K562 (cell line): ENCODE measurements at regions of chr10 and their contacts with region 1.

Region 1: GRCh38 chr10:75235375-75236177 is at the start of gene COMTD1:
- DNase-seq: peak; percentile 96 to 98 (median 96)
- ATAC-seq: peak; percentile 69
- H3K4me3 ChIP-seq: peak within 1 kb of the TSS; percentile 57
- H3K27ac ChIP-seq: peak within 1 kb of the TSS; percentile 91
- H3K4me1 ChIP-seq: peaks cover 16 to 42% of the 10 kb centered on the region in 2 experiments
- H3K27me3 ChIP-seq: no peaks in the 10 kb centered on the region
- CTCF ChIP-seq: peak; percentile 100
- EP300 ChIP-seq: peak; percentile 50; the same call in 1 of the 2 replicates
- POLR2A ChIP-seq: peak; percentile 60; the same call in 1 of the 2 replicates
- RAD21 ChIP-seq: peak; percentile 100
- polyA plus RNA-seq, gene COMTD1: 0.41 to 1.4 TPM

Region 2: DNA sequence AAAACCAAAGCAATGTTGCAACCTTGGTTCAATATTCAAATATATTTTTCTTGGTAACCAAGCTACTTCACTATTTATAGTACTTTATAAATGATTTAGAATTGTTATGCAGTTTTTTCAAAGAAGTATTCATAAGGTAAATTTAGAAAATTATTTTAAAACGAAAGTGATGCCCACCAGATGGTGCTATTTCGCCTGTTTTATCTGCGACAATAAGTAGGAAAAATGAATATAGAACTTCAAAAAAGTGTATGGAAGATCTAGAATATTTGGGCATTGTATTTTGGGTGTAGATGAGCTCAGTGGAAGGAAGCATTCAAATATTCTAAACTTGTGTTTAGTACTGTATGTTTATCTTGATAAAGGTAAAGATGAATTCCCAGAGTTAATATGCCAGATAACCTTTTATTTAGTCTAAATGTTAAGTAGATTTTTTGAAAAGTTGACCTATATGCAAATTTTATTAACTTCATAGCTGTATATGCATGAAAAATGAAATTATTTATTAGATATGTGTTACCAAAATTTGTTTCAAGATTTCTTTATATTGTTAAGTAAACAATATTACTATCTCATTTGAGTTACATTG is 991.4 kb before region 1 on chr10:
- CTCF ChIA-PET with region 1: interaction called, 53 read pairs
- POLR2A ChIA-PET with region 1: interaction called, 3 read pairs
- in situ Hi-C with region 1: loop called (anchors 10 kb)
- intact Hi-C with region 1: loop called (anchors 5 kb)
- DNase-seq: peak in 1 of 4 experiments; percentile 69
- ATAC-seq: no peak
- H3K4me3 ChIP-seq: no peak overlapping the region
- H3K27ac ChIP-seq: no peak overlapping the region
- H3K4me1 ChIP-seq: peaks cover 9 to 14% of the 10 kb centered on the region in 2 experiments; a peak in 4 of 5 replicates
- H3K27me3 ChIP-seq: no peaks in the 10 kb centered on the region
- CTCF ChIP-seq: peak in 2 of 3 experiments; percentile 43 to 73; a peak in 4 of 6 replicates
- EP300 ChIP-seq: no peak
- POLR2A ChIP-seq: no peak
- RAD21 ChIP-seq: peak; percentile 72 to 75

Region 3: DNA sequence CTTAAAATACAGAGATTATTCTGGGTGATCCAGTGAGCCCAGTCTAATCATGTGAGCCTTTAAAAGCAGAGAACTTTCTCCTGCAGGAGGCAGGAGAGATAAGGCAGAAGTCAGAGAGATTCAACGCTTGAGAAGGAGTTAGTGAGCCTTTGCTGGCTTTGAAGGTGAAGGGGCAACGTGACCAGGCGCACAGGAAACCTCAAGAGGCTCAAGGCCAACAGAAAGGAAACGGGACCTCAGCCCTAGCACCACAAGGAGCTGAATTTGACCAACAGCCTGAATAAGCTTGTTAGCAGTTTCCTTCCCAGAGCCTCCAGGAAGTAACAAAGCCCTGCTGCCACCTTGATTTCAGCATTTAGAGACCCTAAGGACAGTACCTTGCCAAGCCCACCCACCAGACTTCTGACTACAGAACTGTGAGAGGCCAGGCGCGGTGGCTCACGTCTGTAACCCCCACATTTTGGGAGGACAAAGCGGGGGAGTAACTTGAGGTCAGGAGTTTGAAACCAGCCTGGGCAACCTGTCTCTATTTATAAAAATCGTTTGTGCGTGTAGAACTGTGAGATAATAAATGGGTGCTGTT is 496.5 kb before region 1 on chr10:
- CTCF ChIA-PET with region 1: interaction called, 3 read pairs
- POLR2A ChIA-PET with region 1: no interaction called
- in situ Hi-C with region 1: no loop called
- intact Hi-C with region 1: loop called (anchors 10 kb)
- DNase-seq: peak in 2 of 4 experiments; percentile 55 to 74
- ATAC-seq: peak; percentile 91
- H3K4me3 ChIP-seq: no peak overlapping the region
- H3K27ac ChIP-seq: no peak overlapping the region
- H3K4me1 ChIP-seq: peaks cover 3 to 7% of the 10 kb centered on the region in 2 experiments; a peak in 3 of 5 replicates
- H3K27me3 ChIP-seq: no peaks in the 10 kb centered on the region
- CTCF ChIP-seq: peak; percentile 56 to 79 (median 63)
- EP300 ChIP-seq: no peak
- POLR2A ChIP-seq: no peak
- RAD21 ChIP-seq: peak; percentile 81 to 88

Region 4: DNA sequence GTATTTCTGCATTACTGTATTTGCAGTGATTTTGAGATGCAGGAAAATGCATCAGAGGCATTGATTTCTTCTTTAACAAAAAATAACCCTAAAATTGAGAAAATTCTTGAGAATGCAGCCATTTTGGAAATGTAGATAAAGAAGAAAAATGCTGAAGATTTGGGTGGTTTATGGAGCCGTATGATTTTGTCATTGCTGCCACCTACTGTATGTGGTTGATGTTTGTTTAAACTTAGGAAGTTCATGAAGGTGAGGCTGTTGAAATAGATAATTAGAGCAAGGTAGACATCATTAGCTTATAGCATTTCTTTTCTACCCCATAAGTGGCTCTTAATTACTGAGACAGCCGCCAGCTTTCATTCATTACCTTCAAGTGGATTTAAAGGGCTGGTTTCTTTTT is 216.2 kb before region 1 on chr10:
- CTCF ChIA-PET with region 1: interaction called, 4 read pairs
- POLR2A ChIA-PET with region 1: no interaction called
- in situ Hi-C with region 1: no loop called
- intact Hi-C with region 1: loop called (anchors 5 kb)
- DNase-seq: peak in 2 of 4 experiments; percentile 40 to 44
- ATAC-seq: peak; percentile 62
- H3K4me3 ChIP-seq: no peak overlapping the region
- H3K27ac ChIP-seq: no peak overlapping the region
- H3K4me1 ChIP-seq: no peaks in the 10 kb centered on the region
- H3K27me3 ChIP-seq: no peaks in the 10 kb centered on the region
- CTCF ChIP-seq: peak; percentile 40 to 67 (median 42); a peak in 5 of 6 replicates
- EP300 ChIP-seq: no peak
- POLR2A ChIP-seq: no peak
- RAD21 ChIP-seq: peak; percentile 83 to 85

Region 5: DNA sequence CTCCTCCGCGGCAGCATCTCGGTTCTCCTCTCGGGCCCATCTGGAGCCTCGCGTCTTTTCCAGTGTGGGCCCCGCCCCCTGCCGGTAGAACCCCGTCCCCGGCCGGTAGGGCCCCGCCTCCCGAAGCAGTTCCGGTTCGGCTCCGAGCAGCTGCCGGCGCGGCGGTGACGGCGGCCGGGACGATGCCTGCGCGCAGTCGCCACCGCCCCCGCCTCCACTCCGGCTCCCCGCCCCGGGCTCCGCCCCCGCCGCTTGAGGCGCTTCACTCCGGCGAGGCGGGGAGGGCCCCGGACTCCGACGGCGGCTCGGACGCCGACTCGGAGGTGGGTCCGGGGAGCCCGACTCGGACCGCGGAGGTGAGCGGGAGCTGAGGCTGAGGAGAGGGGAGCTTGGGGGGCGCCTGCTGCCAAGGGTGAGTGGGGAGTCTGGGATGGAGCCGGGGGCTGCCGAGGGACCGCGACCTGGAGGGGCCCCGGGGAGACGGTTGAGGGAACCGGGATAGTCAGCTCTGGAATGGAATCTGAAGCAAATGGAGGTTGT is 124.1 kb before region 1 on chr10 and contains the start of gene SAMD8:
- CTCF ChIA-PET with region 1: interaction called, 7 read pairs
- POLR2A ChIA-PET with region 1: interaction called, 6 read pairs
- in situ Hi-C with region 1: no loop called
- intact Hi-C with region 1: loop called (anchors 2 kb)
- DNase-seq: peak; percentile 98
- ATAC-seq: peak; percentile 82
- H3K4me3 ChIP-seq: peak within 1 kb of the TSS; percentile 89
- H3K27ac ChIP-seq: peak within 1 kb of the TSS; percentile 85
- H3K4me1 ChIP-seq: peaks cover 51 to 55% of the 10 kb centered on the region in 2 experiments
- H3K27me3 ChIP-seq: no peaks in the 10 kb centered on the region
- CTCF ChIP-seq: peak in 2 of 3 experiments; percentile 18 to 23; a peak in 2 of 6 replicates
- EP300 ChIP-seq: no peak
- POLR2A ChIP-seq: peak; percentile 81
- RAD21 ChIP-seq: no peak
- polyA plus RNA-seq, gene SAMD8: 2.7 to 2.8 TPM

Region 6: GRCh38 chr10:75210282-75211006 is 25.1 kb before region 1 on chr10 and contains the start of gene VDAC2:
- CTCF ChIA-PET with region 1: no interaction called
- POLR2A ChIA-PET with region 1: interaction called, 28 read pairs
- in situ Hi-C with region 1: no loop called
- intact Hi-C with region 1: no loop called
- DNase-seq: peak; percentile 96 to 98 (median 98)
- ATAC-seq: peak; percentile 91
- H3K4me3 ChIP-seq: peak within 1 kb of the TSS; percentile 97
- H3K27ac ChIP-seq: peak within 1 kb of the TSS; percentile 97
- H3K4me1 ChIP-seq: peaks cover 35 to 40% of the 10 kb centered on the region in 2 experiments
- H3K27me3 ChIP-seq: no peaks in the 10 kb centered on the region
- CTCF ChIP-seq: peak in 1 of 3 experiments; percentile 7; a peak in 1 of 6 replicates
- EP300 ChIP-seq: no peak; the same call in 1 of the 2 replicates
- POLR2A ChIP-seq: peak; percentile 90
- RAD21 ChIP-seq: 0 out of 4 replicates have a peak, but pooled peaks of 1 of the 2 experiments have one; percentile 22
- polyA plus RNA-seq, gene VDAC2: 208 to 250 TPM

Region 7: DNA sequence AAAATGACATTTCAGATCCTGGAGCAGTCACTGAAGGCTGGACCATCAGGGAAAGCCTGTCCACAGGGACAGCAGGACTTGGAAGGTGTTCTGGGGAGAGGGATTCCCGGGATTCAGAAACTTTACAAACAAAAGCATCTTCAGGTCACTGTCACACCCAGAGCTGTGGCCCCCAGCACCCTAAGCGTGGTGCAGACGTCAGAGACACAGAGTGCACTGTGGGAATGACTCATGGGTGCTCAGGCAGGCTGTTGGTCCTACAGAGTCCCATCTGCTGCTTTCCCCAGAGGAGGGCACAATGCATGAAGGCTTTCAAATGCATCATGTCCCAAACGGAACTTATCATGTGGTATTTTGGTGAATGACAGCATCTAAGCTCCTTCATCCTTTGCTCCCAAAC is 182.7 kb after region 1 on chr10:
- CTCF ChIA-PET with region 1: no interaction called
- POLR2A ChIA-PET with region 1: no interaction called
- in situ Hi-C with region 1: no loop called
- intact Hi-C with region 1: no loop called
- DNase-seq: no peak
- ATAC-seq: peak; percentile 63; the same call in 2 of the 3 replicates
- H3K4me3 ChIP-seq: no peak overlapping the region
- H3K27ac ChIP-seq: no peak overlapping the region
- H3K4me1 ChIP-seq: no peaks in the 10 kb centered on the region
- H3K27me3 ChIP-seq: peaks cover 10 to 25% of the 10 kb centered on the region in 2 experiments; a peak in 4 of 5 replicates
- CTCF ChIP-seq: no peak
- EP300 ChIP-seq: no peak
- POLR2A ChIP-seq: no peak
- RAD21 ChIP-seq: no peak